ENCODE measurements at regions of chr6 and their contacts with region 1.

Region 1: DNA sequence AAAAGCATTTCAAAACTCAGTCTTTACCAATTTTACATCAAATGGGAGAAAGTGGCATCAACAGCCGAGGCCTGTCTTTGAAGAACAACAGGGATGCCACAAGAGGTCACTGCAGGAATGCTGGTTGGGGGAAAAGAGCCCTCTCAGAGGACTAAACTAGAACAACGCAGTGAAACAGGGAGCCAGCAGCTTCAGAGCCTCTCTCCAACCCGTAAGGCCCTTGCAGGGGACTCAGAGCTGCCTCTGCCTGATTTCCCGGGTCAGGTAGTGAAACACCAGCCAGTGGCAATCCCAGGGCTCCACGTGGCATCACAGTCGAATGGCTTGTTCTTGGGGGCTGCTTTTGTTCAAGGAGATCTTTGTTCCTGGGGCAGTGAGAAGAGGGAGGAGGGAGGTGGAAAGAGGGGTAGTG is 55.0 kb upstream of the KCNK16 start:
- DNase-seq: no peak
- ATAC-seq: peak; percentile 77
- H3K4me3 ChIP-seq: no peak overlapping the region
- H3K27ac ChIP-seq: no peak overlapping the region
- H3K4me1 ChIP-seq: no peaks in the 10 kb centered on the region
- H3K27me3 ChIP-seq: no peaks in the 10 kb centered on the region

Region 2: DNA sequence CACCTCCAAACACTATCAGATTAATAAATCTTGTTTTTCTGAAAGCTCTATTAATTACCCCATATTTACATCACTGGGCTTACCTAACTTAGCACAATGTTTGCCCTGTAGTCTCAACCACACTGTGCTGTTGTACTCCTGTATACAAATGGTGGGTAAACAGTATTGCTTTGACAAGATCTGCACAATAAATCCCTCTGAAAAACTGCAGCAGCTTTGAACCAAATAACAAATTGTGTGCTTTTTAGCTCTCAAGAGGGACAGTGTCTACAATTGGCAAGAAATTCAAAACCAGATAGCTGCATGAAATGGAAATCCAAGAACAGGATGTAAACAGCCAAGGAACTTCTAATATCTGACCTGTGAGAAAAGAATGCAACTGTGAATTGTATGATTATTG is 337.3 kb after region 1 on chr6:
- intact Hi-C with region 1: loop called in 1 of 2 experiments (anchors 10 kb)
- DNase-seq: no peak
- ATAC-seq: no peak
- H3K4me3 ChIP-seq: no peak overlapping the region
- H3K27ac ChIP-seq: no peak overlapping the region
- H3K4me1 ChIP-seq: no peaks in the 10 kb centered on the region
- H3K27me3 ChIP-seq: no peaks in the 10 kb centered on the region